Psoas muscle (tissue), 8 donors: ENCODE measurements at regions of chr19 and their contacts with region 1.

Region 1: DNA sequence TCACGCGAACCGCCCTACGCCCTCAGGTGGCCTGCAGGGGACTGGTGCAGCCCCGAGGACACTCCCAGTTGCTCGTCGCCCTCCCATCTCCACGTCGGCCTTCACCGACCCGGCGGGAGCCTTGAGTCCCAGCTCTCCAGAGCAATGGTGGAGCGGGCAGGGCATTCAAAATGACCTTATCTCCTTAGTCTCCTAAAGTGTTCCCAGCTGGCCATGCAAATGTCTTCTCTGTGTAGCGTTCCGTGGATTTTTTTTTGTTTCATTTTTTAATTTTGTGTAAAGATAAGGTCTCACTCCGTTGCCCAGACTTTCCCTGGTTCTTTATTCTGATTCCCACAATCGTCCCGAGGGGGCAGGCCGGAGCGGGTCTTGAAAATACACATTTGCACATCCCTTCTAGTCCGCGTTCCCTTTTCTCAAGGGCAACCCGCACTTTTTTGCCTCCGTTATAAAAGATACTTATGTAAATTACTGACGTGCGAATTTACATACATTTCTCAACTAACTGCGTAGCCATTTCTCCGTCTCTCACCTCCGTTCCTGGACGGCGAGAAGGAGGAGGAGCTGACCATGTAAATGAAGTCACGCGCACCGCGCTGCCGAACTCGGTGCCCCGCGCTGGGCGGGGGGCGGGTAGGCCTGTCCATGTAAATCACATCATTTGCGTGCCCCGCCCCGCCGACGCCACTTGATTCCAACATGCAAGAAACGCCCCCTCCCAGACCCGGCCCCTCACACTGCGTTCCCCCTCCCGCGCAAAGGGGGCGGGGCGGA is 581 bp upstream of the EGLN2 start:
- DNase-seq: peak; percentile 100
- ATAC-seq: peak; percentile 87 to 92 (median 90)
- H3K4me3 ChIP-seq: peak overlapping the region; percentile 95
- H3K27ac ChIP-seq: peak overlapping the region; percentile 89
- H3K4me1 ChIP-seq: peaks cover 34% of the 10 kb centered on the region
- H3K27me3 ChIP-seq: no peaks in the 10 kb centered on the region
- CTCF ChIP-seq: peak; percentile 26

Region 2: DNA sequence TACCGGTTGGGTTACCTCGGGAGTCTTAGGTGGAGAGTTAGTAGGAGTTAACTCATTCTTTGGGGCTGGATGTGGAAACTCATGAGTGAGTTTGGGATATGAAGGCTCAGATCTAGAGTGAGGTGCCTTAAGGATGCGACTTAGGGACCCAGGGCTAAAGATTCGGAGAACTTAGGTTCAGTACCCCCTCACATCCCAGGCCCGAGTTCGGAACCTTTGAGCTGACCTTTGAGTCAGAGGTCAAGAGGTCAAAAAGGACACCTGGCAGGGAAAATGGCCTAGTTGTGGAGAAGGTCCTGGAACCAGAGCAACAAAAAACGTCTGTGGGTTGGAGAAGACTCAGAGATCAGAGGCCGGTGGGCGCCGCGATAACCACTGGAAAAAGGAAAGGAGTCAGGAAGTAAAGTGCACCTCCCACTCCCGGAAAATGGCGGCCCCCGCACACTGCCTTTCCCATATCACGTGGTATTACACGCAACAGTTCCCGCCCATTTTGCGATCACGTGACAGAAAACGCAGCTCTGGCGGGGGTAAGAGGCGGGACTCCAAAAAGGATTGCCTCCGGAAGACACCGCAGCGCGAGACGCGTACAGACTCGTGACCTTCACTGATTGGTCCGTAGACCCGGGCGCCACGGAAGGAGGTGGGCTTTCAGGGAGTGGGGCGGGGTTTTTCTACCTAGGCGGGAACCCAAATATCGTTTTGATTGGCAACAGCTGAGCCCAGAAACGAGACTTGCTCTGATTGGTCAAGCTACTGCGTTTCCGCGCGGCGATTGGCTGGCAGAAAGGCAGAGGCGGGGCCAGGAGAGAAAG is 48.1 kb before region 1 on chr19 and contains the start of gene ACTMAP:
- intact Hi-C with region 1: loop called in 1 of 2 experiments (anchors 5 kb)
- DNase-seq: peak; percentile 99 to 100
- ATAC-seq: peak; percentile 92 to 95 (median 94)
- H3K4me3 ChIP-seq: peak within 1 kb of the TSS; percentile 84
- H3K27ac ChIP-seq: peak within 1 kb of the TSS; percentile 96
- H3K4me1 ChIP-seq: peaks cover 25% of the 10 kb centered on the region
- H3K27me3 ChIP-seq: no peaks in the 10 kb centered on the region
- CTCF ChIP-seq: no peak
- total RNA-seq, gene ACTMAP: 6.7 to 13.3 (median 9.6) TPM

Region 3: DNA sequence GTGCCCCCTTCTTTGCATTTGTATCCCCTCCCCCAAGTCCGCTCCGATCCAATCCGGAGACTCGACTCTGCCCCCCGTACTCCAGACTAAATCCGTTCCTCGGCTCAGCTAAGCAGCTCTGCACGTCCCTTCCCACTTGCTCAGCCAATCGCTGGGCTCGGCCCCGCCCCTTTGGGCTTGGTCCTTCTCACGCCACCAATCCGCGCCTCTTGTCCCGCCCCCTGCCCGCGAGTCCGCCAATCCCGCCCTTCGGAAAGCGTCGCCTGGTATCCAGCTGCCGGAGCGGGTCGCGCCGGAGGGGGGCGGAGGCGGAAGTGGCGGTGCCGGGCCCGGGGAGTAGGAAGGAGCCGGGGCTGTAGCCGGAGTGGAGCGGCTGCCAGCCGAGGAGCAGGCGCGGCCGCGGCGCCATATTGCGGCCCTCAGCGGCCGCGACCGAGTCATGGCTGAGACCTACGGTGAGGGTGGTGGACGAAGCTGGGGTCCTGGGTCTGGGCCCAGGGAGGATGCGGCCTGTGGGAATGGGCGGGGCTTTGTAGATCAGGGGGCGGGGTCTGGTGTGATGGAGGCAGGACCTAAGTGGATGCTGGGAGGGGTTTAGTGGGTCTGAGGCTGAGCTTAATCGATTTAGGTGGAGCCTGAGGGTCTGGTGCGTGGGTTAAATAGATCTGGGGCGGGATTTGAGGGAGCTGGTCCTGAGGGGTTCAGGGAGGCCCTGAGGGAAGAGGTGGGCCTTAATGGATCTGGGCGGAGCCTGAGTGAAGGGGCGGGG is 20.3 kb before region 1 on chr19 and contains the start of gene RAB4B:
- intact Hi-C with region 1: loop called in 1 of 2 experiments (anchors 1 kb)
- DNase-seq: peak; percentile 100
- ATAC-seq: peak; percentile 96 to 97 (median 96)
- H3K4me3 ChIP-seq: peak within 1 kb of the TSS; percentile 85
- H3K27ac ChIP-seq: peak within 1 kb of the TSS; percentile 98
- H3K4me1 ChIP-seq: peaks cover 12% of the 10 kb centered on the region
- H3K27me3 ChIP-seq: no peaks in the 10 kb centered on the region
- CTCF ChIP-seq: no peak
- total RNA-seq, gene RAB4B: 8.2 to 14.5 (median 13.9) TPM

Region 4: DNA sequence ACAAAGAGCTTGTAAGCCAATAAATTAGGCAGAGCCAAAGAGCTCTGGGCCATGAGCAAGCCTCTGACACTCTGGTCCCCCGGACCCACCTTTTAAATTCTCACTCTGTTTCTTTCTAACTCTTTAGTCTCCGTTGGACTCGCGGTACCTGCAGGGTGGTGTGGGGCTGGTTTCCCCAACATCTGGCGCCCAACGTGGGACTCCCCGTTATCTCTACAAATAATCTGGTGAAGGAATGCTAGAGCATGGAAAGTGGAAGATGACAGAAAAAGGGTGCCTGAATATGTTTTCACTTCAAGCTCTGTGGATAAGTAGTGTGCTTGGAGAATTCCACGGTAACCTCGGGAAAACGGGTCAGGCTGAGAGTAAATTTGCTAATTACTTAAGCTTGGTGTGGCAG is 156.2 kb after region 1 on chr19:
- intact Hi-C with region 1: no loop called
- DNase-seq: no peak
- ATAC-seq: no peak
- H3K4me3 ChIP-seq: no peak overlapping the region
- H3K27ac ChIP-seq: no peak overlapping the region
- H3K4me1 ChIP-seq: no peaks in the 10 kb centered on the region
- H3K27me3 ChIP-seq: peaks cover 0 to 2% (median 0%) of the 10 kb centered on the region in 3 donors
- CTCF ChIP-seq: no peak

Region 5: DNA sequence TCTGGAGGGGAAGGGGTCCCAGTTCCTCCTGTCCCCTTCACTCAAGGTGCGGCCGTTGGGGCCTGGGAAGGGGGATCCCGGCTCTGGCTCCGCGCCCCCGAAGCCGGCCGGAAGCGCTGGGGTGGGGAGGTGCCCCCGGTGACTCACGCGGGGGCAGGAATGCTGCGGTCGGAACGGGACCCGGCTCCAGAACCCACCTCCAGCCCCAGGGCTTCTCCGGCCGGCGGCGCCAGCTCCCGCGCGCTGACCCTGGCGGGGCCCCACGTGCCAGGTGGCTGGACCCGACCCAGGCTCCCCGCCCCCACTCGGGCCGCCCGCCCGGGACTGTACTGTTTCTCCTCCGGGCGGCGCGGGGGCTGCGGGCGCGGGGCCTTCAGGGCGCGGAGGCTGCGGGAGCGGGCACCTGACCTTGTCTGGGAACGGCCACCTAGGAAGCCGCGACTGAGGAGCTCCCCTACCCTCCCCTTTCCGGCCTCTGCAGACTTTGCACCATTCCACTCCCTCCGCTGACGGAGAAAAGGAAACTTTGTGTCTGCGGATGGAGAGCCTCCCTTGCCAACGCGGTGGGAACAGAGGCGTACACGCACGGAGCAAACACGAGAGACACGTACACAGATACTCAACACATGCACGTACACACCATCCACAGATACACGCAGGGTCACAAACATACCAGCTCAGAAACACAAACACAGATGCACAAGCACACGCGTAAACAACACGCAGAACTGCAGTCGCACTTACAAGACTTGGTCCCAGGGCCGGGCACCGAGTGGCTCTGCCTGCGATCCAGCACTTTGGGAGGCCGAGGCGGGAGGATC is 427.9 kb after region 1 on chr19:
- intact Hi-C with region 1: no loop called
- DNase-seq: peak; percentile 79 to 83
- ATAC-seq: peak; percentile 76 to 90 (median 84)
- H3K4me3 ChIP-seq: peak overlapping the region; percentile 62
- H3K27ac ChIP-seq: peak overlapping the region; percentile 46
- H3K4me1 ChIP-seq: no peaks in the 10 kb centered on the region
- H3K27me3 ChIP-seq: peaks cover 0 to 53% (median 0%) of the 10 kb centered on the region in 3 donors
- CTCF ChIP-seq: no peak